Naive thymus-derived CD8-positive, alpha-beta T cell (primary cell): ENCODE measurements at regions of chr6 and their contacts with region 1.

Region 1: GRCh38 chr6:149140137-149140909 is 177.2 kb upstream of the TAB2 start:
- DNase-seq: peak in 7 of 10 donors; percentile 7 to 61 (median 40)
- ATAC-seq: peak; percentile 61 to 72
- H3K4me3 Mint-ChIP-seq: peak overlapping the region; percentile 56 to 85 (median 80)
- H3K27ac Mint-ChIP-seq: peak overlapping the region; percentile 96 to 100 (median 98)
- H3K4me1 Mint-ChIP-seq: peaks cover 22 to 33% (median 32%) of the 10 kb centered on the region in 4 donors
- H3K27me3 Mint-ChIP-seq: no peaks in the 10 kb centered on the region

Region 2: GRCh38 chr6:148973538-148974208 is 166.7 kb before region 1 on chr6:
- POLR2A ChIA-PET with region 1: no interaction called
- DNase-seq: no peak
- ATAC-seq: no peak
- H3K4me3 Mint-ChIP-seq: no peak overlapping the region
- H3K27ac Mint-ChIP-seq: no peak overlapping the region
- H3K4me1 Mint-ChIP-seq: peaks cover 2 to 5% (median 4%) of the 10 kb centered on the region in 4 donors
- H3K27me3 Mint-ChIP-seq: peaks cover 2 to 20% (median 16%) of the 10 kb centered on the region in 5 donors

Region 3: GRCh38 chr6:149129371-149130077 is 10.8 kb before region 1 on chr6:
- POLR2A ChIA-PET with region 1: interaction called, 32 read pairs
- DNase-seq: no peak
- ATAC-seq: no peak
- H3K4me3 Mint-ChIP-seq: peak overlapping the region in 2 of 10 donors; percentile 26 to 57
- H3K27ac Mint-ChIP-seq: peak overlapping the region; percentile 72 to 98 (median 90)
- H3K4me1 Mint-ChIP-seq: peaks cover 34 to 62% (median 54%) of the 10 kb centered on the region in 4 donors
- H3K27me3 Mint-ChIP-seq: no peaks in the 10 kb centered on the region